Common myeloid progenitor, CD34-positive (primary cell): ENCODE measurements at regions of chr7 and their contacts with region 1.

Region 1: DNA sequence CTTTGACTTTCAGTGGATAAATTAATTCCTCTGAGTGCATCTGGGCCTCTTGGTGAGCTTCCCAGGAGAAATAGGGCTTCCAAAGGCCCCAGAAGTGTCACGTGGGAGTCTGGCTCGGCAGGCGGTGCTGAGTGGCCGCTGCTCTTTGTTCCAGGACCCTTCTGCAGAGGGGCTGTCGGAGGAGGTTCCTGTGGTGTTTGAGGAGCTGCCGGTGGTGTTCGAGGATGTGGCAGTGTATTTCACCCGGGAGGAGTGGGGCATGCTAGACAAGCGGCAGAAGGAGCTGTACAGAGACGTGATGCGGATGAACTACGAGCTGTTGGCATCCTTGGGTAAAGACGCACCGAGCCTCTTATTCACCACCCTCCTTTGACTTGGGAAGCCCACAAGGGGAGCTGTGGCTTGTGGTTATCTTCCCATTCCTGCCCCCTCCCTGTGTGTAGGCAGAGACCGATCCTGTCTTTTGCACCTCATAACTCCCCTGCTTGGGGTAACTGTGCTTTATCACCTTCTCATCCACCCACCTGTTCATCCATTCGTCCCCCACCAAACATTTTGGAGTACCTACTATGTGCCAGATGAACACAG is 11.9 kb downstream of the ZNF862 start:
- DNase-seq: no peak
- H3K4me3 ChIP-seq: no peak overlapping the region
- H3K27ac ChIP-seq: no peak overlapping the region
- H3K4me1 ChIP-seq: no peaks in the 10 kb centered on the region
- H3K27me3 ChIP-seq: no peaks in the 10 kb centered on the region

Region 2: GRCh38 chr7:149811221-149811620 is 38.9 kb before region 1 on chr7:
- CTCF ChIA-PET with region 1: no interaction called
- POLR2A ChIA-PET with region 1: no interaction called
- DNase-seq: no peak
- H3K4me3 ChIP-seq: no peak overlapping the region
- H3K27ac ChIP-seq: no peak overlapping the region
- H3K4me1 ChIP-seq: no peaks in the 10 kb centered on the region
- H3K27me3 ChIP-seq: no peaks in the 10 kb centered on the region

Region 3: DNA sequence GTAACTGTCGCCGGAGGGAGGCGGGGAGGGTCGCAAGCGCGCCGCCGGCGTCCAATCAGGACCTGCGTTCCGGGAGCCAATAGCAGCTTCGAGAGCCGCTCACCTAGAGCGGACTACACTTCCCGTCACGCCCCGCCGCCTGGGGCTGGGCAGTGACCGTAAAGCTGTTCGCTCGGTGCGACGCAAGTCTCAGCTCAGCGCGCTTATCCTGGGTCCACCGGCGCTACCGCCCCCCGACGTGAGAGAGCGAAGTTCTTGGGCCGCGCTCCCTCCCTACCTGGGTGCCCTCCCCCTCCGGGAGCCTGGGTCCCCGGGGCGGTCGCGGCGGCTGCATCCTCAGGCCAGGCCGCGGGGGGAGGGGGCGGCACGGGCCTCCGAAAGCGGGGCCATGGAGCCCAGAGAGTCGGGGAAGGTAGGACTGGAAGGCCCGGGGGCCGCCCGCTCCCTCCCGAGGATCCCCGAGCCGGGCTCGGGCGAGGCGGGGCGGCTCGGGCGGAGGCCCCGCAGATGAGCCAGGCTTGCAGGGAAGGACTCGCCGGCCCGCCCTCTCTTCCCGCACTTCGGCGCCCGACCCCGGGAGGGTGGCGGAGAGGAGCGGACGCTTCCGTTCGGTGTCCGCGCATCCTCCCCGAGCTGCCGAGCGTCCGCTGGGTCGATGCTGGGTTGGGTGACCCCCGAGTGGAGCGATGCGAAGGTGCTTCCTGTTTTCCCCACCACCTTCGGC is 11.7 kb before region 1 on chr7 and contains the start of gene ZNF862:
- CTCF ChIA-PET with region 1: interaction called, 18 read pairs
- POLR2A ChIA-PET with region 1: no interaction called
- DNase-seq: peak; percentile 98 to 99 (median 99)
- H3K4me3 ChIP-seq: peak within 1 kb of the TSS; percentile 81 to 93 (median 88)
- H3K27ac ChIP-seq: peak within 1 kb of the TSS in 1 of 2 experiments; percentile 69
- H3K4me1 ChIP-seq: peaks cover 2 to 12% (median 8%) of the 10 kb centered on the region in 4 experiments
- H3K27me3 ChIP-seq: no peaks in the 10 kb centered on the region